ENCODE measurements at regions of chr2 and their contacts with region 1.

Region 1: GRCh38 chr2:108927936-108928659 is 60.9 kb downstream of the EDAR start:
- DNase-seq: no peak
- H3K4me3 ChIP-seq: no peak overlapping the region
- H3K27me3 ChIP-seq: peaks cover 21% of the 10 kb centered on the region
- CTCF ChIP-seq: peak; percentile 90

Region 2: DNA sequence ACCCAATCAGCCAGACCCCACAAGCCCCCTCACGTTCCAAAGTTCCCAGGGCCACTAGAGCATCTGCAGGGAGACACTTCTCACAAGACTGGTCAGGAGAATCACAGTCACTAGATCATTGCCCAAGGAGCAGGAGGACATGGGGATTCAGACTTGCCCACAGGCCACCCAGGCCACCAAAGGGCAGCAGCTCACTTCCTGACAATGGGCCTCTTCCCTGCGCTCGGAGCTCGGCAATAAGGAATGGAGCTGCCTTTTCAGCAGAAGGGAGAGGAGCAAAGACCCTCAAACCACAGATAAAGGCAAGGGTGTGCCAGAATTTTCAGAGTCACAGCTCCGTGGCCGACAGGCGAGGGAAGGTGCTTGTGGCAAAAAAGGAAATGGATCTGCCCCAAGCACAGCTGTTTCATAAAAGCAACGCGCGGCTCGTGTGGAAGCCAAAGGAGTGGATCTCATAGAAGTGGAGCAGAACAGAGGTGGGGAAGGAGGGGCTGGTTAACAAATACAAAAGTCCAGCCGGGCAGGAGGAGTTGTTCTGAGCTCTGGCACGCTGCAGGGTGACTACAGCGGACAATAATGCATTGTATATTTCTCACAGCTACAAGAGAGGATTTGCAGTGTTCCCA is 11.2 kb before region 1 on chr2:
- CTCF ChIA-PET with region 1: interaction called, 52 read pairs
- POLR2A ChIA-PET with region 1: no interaction called
- DNase-seq: no peak
- H3K4me3 ChIP-seq: no peak overlapping the region
- H3K27me3 ChIP-seq: peaks cover 19% of the 10 kb centered on the region
- CTCF ChIP-seq: no peak

Region 3: GRCh38 chr2:108938077-108938710 is 10.1 kb after region 1 on chr2:
- CTCF ChIA-PET with region 1: interaction called, 16 read pairs
- POLR2A ChIA-PET with region 1: no interaction called
- DNase-seq: no peak
- H3K4me3 ChIP-seq: no peak overlapping the region
- H3K27me3 ChIP-seq: peaks cover 5% of the 10 kb centered on the region
- CTCF ChIP-seq: no peak

Region 4: GRCh38 chr2:108978709-108979111 is 50.6 kb after region 1 on chr2:
- CTCF ChIA-PET with region 1: no interaction called
- POLR2A ChIA-PET with region 1: no interaction called
- DNase-seq: no peak
- H3K4me3 ChIP-seq: no peak overlapping the region
- H3K27me3 ChIP-seq: peaks cover 34% of the 10 kb centered on the region
- CTCF ChIP-seq: no peak